ENCODE measurements at regions of chrX and their contacts with region 1.

Region 1: GRCh38 chrX:13646154-13646549 is 6.8 kb upstream of the TCEANC start:
- H3K4me3 ChIP-seq: no peak overlapping the region
- H3K27ac ChIP-seq: no peak overlapping the region; the same call in 1 of the 2 replicates
- H3K4me1 ChIP-seq: peaks cover 5% of the 10 kb centered on the region; the same call in 1 of the 2 replicates
- CTCF ChIP-seq: no peak; the same call in 1 of the 2 replicates

Region 2: DNA sequence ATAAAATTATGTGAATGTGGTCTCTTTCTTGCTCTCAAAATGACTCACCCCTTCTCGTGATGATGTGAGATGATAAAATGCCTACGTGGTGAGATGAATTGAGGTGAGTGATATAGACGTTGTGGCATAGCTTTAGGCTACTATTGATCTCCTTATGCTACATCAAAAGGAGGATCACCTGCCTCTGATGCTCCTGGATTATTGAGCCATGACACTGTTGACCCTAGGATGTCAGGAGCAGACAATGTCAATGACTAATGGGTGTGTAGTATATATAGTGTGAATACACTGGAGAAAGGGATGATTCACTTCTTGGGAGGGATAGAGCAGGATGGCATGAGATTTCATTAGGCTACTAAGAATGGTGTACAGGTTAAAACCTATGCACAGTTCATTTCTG is 1065.6 kb before region 1 on chrX:
- CTCF ChIA-PET with region 1: no interaction called
- POLR2A ChIA-PET with region 1: no interaction called
- H3K4me3 ChIP-seq: no peak overlapping the region
- H3K27ac ChIP-seq: no peak overlapping the region
- H3K4me1 ChIP-seq: no peaks in the 10 kb centered on the region
- CTCF ChIP-seq: no peak

Region 3: GRCh38 chrX:13357925-13358324 is 288.2 kb before region 1 on chrX:
- CTCF ChIA-PET with region 1: no interaction called
- POLR2A ChIA-PET with region 1: no interaction called
- H3K4me3 ChIP-seq: no peak overlapping the region
- H3K27ac ChIP-seq: peak overlapping the region; percentile 80
- H3K4me1 ChIP-seq: peaks cover 13% of the 10 kb centered on the region
- CTCF ChIP-seq: no peak

Region 4: GRCh38 chrX:13499736-13500135 is 146.4 kb before region 1 on chrX:
- CTCF ChIA-PET with region 1: interaction called, 12 read pairs
- POLR2A ChIA-PET with region 1: no interaction called
- H3K4me3 ChIP-seq: no peak overlapping the region
- H3K27ac ChIP-seq: no peak overlapping the region
- H3K4me1 ChIP-seq: peaks cover 3% of the 10 kb centered on the region; the same call in 1 of the 2 replicates
- CTCF ChIP-seq: no peak

Region 5: GRCh38 chrX:13511944-13512330 is 134.2 kb before region 1 on chrX:
- CTCF ChIA-PET with region 1: interaction called, 86 read pairs
- POLR2A ChIA-PET with region 1: no interaction called
- H3K4me3 ChIP-seq: no peak overlapping the region
- H3K27ac ChIP-seq: no peak overlapping the region
- H3K4me1 ChIP-seq: no peaks in the 10 kb centered on the region
- CTCF ChIP-seq: no peak

Region 6: DNA sequence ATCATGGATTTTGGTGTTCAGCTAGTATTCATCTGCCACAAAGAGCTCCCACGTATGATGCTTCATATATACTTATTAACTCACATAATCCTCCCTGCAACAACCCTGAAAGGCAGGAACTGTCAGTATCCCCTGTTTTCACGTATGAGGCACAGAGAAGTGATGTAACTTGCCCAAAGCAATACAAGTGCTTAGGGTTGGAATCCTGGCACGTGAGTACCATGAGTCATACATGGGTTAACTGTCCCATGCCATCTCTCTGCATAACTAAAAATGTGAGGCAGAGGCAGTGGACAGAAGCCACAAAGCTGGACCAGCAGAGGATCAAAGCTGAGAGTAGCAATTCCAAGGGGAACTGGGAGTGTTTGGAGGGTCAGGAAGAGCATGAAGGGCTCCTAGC is 112.4 kb before region 1 on chrX:
- CTCF ChIA-PET with region 1: no interaction called
- POLR2A ChIA-PET with region 1: no interaction called
- H3K4me3 ChIP-seq: no peak overlapping the region
- H3K27ac ChIP-seq: no peak overlapping the region
- H3K4me1 ChIP-seq: no peaks in the 10 kb centered on the region
- CTCF ChIP-seq: no peak

Region 7: GRCh38 chrX:13627311-13627710 is 18.8 kb before region 1 on chrX:
- CTCF ChIA-PET with region 1: interaction called, 12 read pairs
- POLR2A ChIA-PET with region 1: interaction called, 3 read pairs
- H3K4me3 ChIP-seq: no peak overlapping the region
- H3K27ac ChIP-seq: no peak overlapping the region
- H3K4me1 ChIP-seq: no peaks in the 10 kb centered on the region
- CTCF ChIP-seq: no peak

Measured in HEK293 (cell line).